K562 (cell line): ENCODE measurements at regions of chr2 and their contacts with region 1.

Region 1: DNA sequence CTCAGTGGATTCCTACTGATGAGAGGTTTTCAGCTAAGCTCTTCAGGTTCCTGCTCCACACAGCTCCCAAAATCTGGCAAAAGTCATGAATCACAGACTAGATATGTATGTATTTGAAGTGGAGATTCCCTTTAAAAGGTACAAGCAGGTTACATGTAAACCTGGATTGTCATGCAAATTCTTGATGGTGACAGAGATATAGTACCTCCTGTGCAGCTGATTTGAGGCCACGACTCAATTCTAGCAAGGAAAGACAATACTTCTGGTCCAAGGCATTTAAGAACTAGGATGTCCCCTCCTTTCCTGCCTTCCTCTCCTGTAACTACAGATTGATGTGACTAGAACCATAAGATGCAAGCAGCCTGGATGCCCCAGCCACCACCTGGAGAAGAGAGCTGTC is 55.0 kb downstream of the GORASP2 start:
- DNase-seq: no peak
- ATAC-seq: peak; percentile 37
- H3K4me3 ChIP-seq: no peak overlapping the region
- H3K27ac ChIP-seq: no peak overlapping the region
- H3K4me1 ChIP-seq: peaks cover 0 to 6% of the 10 kb centered on the region in 2 experiments; a peak in 2 of 5 replicates
- H3K27me3 ChIP-seq: no peaks in the 10 kb centered on the region
- CTCF ChIP-seq: no peak
- EP300 ChIP-seq: no peak
- POLR2A ChIP-seq: no peak
- RAD21 ChIP-seq: no peak

Region 2: GRCh38 chr2:170905864-170906263 is 78.2 kb before region 1 on chr2:
- CTCF ChIA-PET with region 1: no interaction called
- POLR2A ChIA-PET with region 1: no interaction called
- in situ Hi-C with region 1: no loop called
- intact Hi-C with region 1: no loop called
- DNase-seq: peak in 1 of 4 experiments; percentile 37
- ATAC-seq: peak; percentile 84
- H3K4me3 ChIP-seq: no peak overlapping the region
- H3K27ac ChIP-seq: no peak overlapping the region
- H3K4me1 ChIP-seq: no peaks in the 10 kb centered on the region
- H3K27me3 ChIP-seq: peaks cover 0 to 10% of the 10 kb centered on the region in 2 experiments; a peak in 1 of 5 replicates
- CTCF ChIP-seq: no peak
- EP300 ChIP-seq: no peak
- POLR2A ChIP-seq: no peak
- RAD21 ChIP-seq: no peak

Region 3: GRCh38 chr2:171237751-171238505 is 253.8 kb after region 1 on chr2:
- CTCF ChIA-PET with region 1: no interaction called
- POLR2A ChIA-PET with region 1: no interaction called
- in situ Hi-C with region 1: loop called (anchors 10 kb)
- intact Hi-C with region 1: no loop called
- DNase-seq: no peak
- ATAC-seq: no peak
- H3K4me3 ChIP-seq: no peak overlapping the region
- H3K27ac ChIP-seq: no peak overlapping the region
- H3K4me1 ChIP-seq: no peaks in the 10 kb centered on the region; a peak in 1 of 5 replicates
- H3K27me3 ChIP-seq: no peaks in the 10 kb centered on the region
- CTCF ChIP-seq: no peak
- EP300 ChIP-seq: no peak
- POLR2A ChIP-seq: no peak
- RAD21 ChIP-seq: no peak